ENCODE measurements at regions of chr22 and their contacts with region 1.

Region 1: DNA sequence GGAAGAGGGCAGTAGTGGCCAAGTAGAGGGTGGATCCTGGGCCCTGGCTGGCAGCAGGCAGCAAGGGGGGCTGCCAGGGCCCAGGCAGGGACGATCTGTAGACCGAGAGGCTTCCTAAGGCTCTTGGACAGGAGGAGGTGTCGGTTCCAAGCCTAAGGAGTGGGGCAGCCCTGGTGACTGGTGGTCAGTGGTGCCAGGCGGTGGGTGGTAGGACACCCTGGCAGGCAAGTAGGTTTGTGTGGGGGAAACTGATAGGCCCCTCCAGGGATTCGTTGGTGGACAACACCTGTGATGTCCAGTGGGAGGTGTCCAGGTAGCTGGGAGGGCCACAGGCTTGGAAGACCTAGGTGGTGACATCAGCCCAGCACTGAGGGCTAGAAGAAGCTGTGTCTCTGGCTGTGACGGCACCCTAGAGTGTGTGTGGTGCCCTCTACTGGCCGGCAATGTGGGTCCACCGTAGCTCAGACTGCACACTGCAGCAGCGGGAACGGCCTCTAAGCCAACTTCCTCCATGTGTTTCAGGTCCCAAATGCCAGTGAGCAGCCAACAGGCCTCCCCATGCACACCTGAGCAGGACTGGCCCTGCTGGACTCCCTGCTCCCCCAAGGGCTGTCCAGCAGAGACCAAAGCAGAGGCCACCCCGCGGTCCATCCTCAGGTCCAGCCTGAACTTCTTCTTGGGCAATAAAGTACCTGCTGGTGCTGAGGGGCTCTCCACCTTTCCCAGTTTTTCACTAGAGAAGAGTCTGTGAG is 9.4 kb upstream of the SAMM50 start:
- DNase-seq: peak; percentile 81
- ATAC-seq: peak; percentile 100
- H3K4me3 Mint-ChIP-seq: no peak overlapping the region
- H3K27ac Mint-ChIP-seq: no peak overlapping the region
- H3K4me1 Mint-ChIP-seq: no peaks in the 10 kb centered on the region
- H3K27me3 Mint-ChIP-seq: peaks cover 14% of the 10 kb centered on the region

Region 2: GRCh38 chr22:43884600-43885325 is 61.0 kb before region 1 on chr22:
- CTCF ChIA-PET with region 1: interaction called, 69 read pairs
- POLR2A ChIA-PET with region 1: no interaction called
- DNase-seq: peak; percentile 63
- ATAC-seq: peak; percentile 60
- H3K4me3 Mint-ChIP-seq: no peak overlapping the region
- H3K27ac Mint-ChIP-seq: no peak overlapping the region
- H3K4me1 Mint-ChIP-seq: no peaks in the 10 kb centered on the region
- H3K27me3 Mint-ChIP-seq: peaks cover 6% of the 10 kb centered on the region

Region 3: GRCh38 chr22:43897751-43898261 is 48.0 kb before region 1 on chr22:
- CTCF ChIA-PET with region 1: interaction called, 10 read pairs
- POLR2A ChIA-PET with region 1: no interaction called
- DNase-seq: no peak
- ATAC-seq: no peak
- H3K4me3 Mint-ChIP-seq: no peak overlapping the region
- H3K27ac Mint-ChIP-seq: no peak overlapping the region
- H3K4me1 Mint-ChIP-seq: no peaks in the 10 kb centered on the region
- H3K27me3 Mint-ChIP-seq: peaks cover 3% of the 10 kb centered on the region

Region 4: DNA sequence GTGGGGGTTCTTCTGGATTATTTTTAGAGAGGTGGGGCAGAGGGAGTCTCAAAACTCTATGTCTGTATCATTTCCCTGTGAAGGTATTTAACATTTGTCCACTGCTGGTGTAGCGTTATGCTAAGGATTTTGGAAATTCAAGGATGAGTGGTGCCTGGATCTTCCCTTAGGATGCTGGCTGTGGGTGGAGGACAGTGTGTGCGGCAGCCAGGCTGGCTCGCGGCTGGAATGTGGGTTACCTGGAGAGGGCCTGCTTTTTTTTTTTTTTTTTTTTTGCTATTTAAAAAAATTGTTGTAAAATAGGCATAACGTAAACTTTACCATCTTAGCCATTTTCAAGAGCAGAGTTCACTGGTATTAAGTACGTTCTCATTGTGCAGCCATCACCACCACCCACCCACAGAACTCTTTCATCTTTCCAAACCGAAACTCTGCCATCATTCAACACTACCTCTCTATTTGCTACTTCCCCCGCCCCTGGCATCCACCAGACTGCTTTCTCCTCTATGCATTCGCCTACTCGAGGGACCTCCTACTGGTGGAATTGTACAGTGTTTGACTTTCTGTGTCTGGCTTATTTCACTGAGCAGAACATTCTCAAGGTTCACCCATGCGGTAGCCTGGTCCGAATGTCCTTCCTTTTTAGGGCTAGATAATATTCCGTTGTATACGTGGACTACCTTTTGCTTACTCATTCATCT is 145.4 kb after region 1 on chr22:
- CTCF ChIA-PET with region 1: no interaction called
- POLR2A ChIA-PET with region 1: no interaction called
- DNase-seq: peak; percentile 57
- ATAC-seq: peak; percentile 79
- H3K4me3 Mint-ChIP-seq: no peak overlapping the region
- H3K27ac Mint-ChIP-seq: no peak overlapping the region
- H3K4me1 Mint-ChIP-seq: peaks cover 10% of the 10 kb centered on the region
- H3K27me3 Mint-ChIP-seq: no peaks in the 10 kb centered on the region

Measured in activated CD8-positive, alpha-beta T cell treated with anti-CD3 and anti-CD28 coated beads, Interleukin-2, amount 10 ng/mL, durations not matched to agents 7 days and 5 days (primary cell).